ENCODE measurements at regions of chr7 and their contacts with region 1.

Region 1: GRCh38 chr7:135281363-135281949 is 47.8 kb downstream of the STRA8 start:
- DNase-seq: peak; percentile 84
- ATAC-seq: peak; percentile 88
- H3K4me3 ChIP-seq: peak overlapping the region; percentile 20; the same call in 1 of the 2 replicates
- H3K27ac ChIP-seq: no peak overlapping the region
- H3K4me1 ChIP-seq: peaks cover 12% of the 10 kb centered on the region; the same call in 1 of the 2 replicates
- H3K27me3 ChIP-seq: no peaks in the 10 kb centered on the region
- CTCF ChIP-seq: peak; percentile 99

Region 2: DNA sequence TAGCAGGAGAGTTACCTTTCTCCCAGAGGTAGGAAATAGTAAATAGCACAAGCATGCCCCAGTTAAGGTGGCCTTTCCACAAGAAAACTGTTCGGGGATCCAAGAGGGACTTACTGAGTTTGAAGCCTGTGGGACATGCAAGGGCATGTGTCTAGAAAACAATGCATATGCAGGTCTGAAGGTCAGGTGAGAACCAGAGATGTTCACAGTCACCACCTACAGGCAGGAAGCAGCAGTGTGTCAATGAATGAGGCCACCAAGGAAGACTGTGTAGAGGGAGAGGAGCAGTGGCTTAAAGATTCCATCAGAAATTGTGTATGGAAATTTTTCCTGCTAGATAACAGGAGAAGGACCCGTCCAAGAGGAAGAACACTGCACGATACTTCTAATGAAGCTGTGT is 436.0 kb before region 1 on chr7:
- CTCF ChIA-PET with region 1: no interaction called
- POLR2A ChIA-PET with region 1: no interaction called
- intact Hi-C with region 1: no loop called
- DNase-seq: peak; percentile 35
- ATAC-seq: peak; percentile 62
- H3K4me3 ChIP-seq: no peak overlapping the region
- H3K27ac ChIP-seq: no peak overlapping the region
- H3K4me1 ChIP-seq: peaks cover 13% of the 10 kb centered on the region
- H3K27me3 ChIP-seq: no peaks in the 10 kb centered on the region
- CTCF ChIP-seq: peak; percentile 60

Region 3: GRCh38 chr7:135240441-135240840 is 41.0 kb before region 1 on chr7:
- CTCF ChIA-PET with region 1: no interaction called
- POLR2A ChIA-PET with region 1: no interaction called
- intact Hi-C with region 1: no loop called
- DNase-seq: no peak
- ATAC-seq: no peak
- H3K4me3 ChIP-seq: no peak overlapping the region
- H3K27ac ChIP-seq: no peak overlapping the region
- H3K4me1 ChIP-seq: no peaks in the 10 kb centered on the region
- H3K27me3 ChIP-seq: no peaks in the 10 kb centered on the region
- CTCF ChIP-seq: no peak

Region 4: DNA sequence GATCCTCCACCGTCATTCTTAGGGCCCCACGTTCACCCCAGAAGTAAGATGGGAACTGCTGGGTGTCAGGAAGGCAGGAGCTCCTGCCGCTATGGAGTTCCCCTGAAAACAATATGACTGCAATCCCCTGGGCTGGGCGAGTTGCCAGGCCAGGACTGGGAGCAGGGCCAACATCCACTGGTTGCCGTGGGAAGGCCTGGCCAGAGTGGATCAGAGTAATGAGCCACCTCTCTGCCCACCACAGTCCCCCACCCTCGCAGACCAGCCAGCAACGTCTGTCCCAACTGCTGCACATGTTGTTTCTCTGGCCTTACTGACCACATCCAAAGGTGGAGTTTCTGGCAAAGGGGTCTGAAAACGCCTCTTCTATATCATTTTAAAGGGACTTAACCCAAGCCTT is 38.8 kb after region 1 on chr7:
- CTCF ChIA-PET with region 1: no interaction called
- POLR2A ChIA-PET with region 1: no interaction called
- intact Hi-C with region 1: no loop called
- DNase-seq: peak; percentile 56
- ATAC-seq: no peak
- H3K4me3 ChIP-seq: no peak overlapping the region
- H3K27ac ChIP-seq: no peak overlapping the region
- H3K4me1 ChIP-seq: peaks cover 4% of the 10 kb centered on the region; the same call in 1 of the 2 replicates
- H3K27me3 ChIP-seq: no peaks in the 10 kb centered on the region
- CTCF ChIP-seq: no peak

Region 5: GRCh38 chr7:135335628-135336139 is 54.2 kb after region 1 on chr7:
- CTCF ChIA-PET with region 1: interaction called, 19 read pairs
- POLR2A ChIA-PET with region 1: no interaction called
- intact Hi-C with region 1: loop called (anchors 1 kb)
- DNase-seq: peak; percentile 79
- ATAC-seq: peak; percentile 92
- H3K4me3 ChIP-seq: no peak overlapping the region
- H3K27ac ChIP-seq: no peak overlapping the region
- H3K4me1 ChIP-seq: peaks cover 14% of the 10 kb centered on the region
- H3K27me3 ChIP-seq: no peaks in the 10 kb centered on the region
- CTCF ChIP-seq: peak; percentile 84

Region 6: GRCh38 chr7:135403302-135403701 is 121.8 kb after region 1 on chr7:
- CTCF ChIA-PET with region 1: no interaction called
- POLR2A ChIA-PET with region 1: no interaction called
- intact Hi-C with region 1: loop called (anchors 5 kb)
- DNase-seq: no peak
- ATAC-seq: no peak
- H3K4me3 ChIP-seq: no peak overlapping the region
- H3K27ac ChIP-seq: no peak overlapping the region
- H3K4me1 ChIP-seq: no peaks in the 10 kb centered on the region
- H3K27me3 ChIP-seq: no peaks in the 10 kb centered on the region
- CTCF ChIP-seq: no peak

Region 7: DNA sequence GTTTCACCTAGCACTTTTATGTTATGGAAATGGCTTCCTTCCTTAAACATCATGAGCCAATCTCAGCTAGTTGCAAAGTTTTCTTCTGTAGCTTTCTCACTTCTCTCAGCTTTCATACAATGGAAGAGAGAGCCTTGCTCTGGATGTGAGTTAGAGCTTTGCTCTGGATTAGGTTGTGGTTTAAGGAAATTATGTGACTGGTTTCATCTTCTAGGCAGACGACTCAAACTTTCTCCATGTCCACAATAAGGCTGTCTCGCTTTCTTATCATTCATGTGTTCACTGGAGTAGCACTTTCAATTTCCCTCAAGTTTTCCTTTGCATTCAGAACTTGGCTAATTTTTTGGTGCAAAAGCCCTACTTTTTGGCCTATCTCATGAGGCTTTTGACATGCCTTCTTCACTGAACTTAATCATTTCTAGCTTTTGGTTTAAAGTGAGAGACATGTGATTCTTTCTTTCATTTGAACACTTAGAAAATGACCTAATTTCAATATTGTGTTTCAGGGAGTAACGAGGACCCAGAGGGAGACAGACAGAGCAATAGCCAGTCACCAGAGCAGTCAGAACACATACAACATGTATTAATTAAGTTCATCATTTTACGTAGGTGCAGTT is 178.6 kb after region 1 on chr7:
- CTCF ChIA-PET with region 1: no interaction called
- POLR2A ChIA-PET with region 1: no interaction called
- intact Hi-C with region 1: no loop called
- DNase-seq: no peak
- ATAC-seq: no peak
- H3K4me3 ChIP-seq: no peak overlapping the region
- H3K27ac ChIP-seq: no peak overlapping the region
- H3K4me1 ChIP-seq: no peaks in the 10 kb centered on the region
- H3K27me3 ChIP-seq: no peaks in the 10 kb centered on the region
- CTCF ChIP-seq: no peak

Region 8: GRCh38 chr7:135509903-135510602 is 228.6 kb after region 1 on chr7 and contains the start of gene CNOT4:
- CTCF ChIA-PET with region 1: no interaction called
- POLR2A ChIA-PET with region 1: no interaction called
- intact Hi-C with region 1: loop called (anchors 1 kb)
- DNase-seq: peak; percentile 93
- ATAC-seq: peak; percentile 91
- H3K4me3 ChIP-seq: peak within 1 kb of the TSS; percentile 84
- H3K27ac ChIP-seq: peak within 1 kb of the TSS; percentile 53; the same call in 1 of the 2 replicates
- H3K4me1 ChIP-seq: peaks cover 22% of the 10 kb centered on the region
- H3K27me3 ChIP-seq: no peaks in the 10 kb centered on the region
- CTCF ChIP-seq: no peak
- total RNA-seq, gene CNOT4: 8.4 and 9.7 TPM in 2 replicates

Region 9: DNA sequence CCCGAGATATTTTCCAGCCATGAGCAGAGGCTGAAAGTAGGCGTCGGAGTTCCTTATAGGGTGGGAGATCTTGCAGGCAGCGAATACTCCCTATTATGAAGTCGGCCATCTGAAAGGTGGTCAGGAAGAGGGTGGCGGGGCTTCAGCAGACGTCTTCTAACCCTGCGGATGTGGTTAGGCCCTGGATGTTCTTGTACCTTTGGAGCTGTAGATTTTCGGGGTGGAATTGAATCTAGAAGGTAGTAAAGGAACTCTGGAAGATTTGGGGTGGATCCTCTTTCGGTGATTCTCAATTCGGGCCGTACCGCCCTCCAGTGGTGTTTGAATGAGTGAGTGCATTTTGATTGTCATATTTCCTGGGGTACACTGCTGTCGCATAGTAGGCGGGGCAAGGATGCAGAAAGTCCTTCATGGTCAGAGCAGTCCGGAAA is 276.9 kb after region 1 on chr7:
- CTCF ChIA-PET with region 1: interaction called, 3 read pairs
- POLR2A ChIA-PET with region 1: no interaction called
- intact Hi-C with region 1: loop called (anchors 1 kb)
- DNase-seq: peak; percentile 75
- ATAC-seq: peak; percentile 66
- H3K4me3 ChIP-seq: peak overlapping the region; percentile 93
- H3K27ac ChIP-seq: peak overlapping the region; percentile 83
- H3K4me1 ChIP-seq: peaks cover 6% of the 10 kb centered on the region
- H3K27me3 ChIP-seq: no peaks in the 10 kb centered on the region
- CTCF ChIP-seq: peak; percentile 78

Region 10: GRCh38 chr7:135645296-135645904 is 363.9 kb after region 1 on chr7:
- CTCF ChIA-PET with region 1: no interaction called
- POLR2A ChIA-PET with region 1: no interaction called
- intact Hi-C with region 1: loop called (anchors 1 kb)
- DNase-seq: peak; percentile 63
- ATAC-seq: peak; percentile 80
- H3K4me3 ChIP-seq: no peak overlapping the region
- H3K27ac ChIP-seq: no peak overlapping the region
- H3K4me1 ChIP-seq: no peaks in the 10 kb centered on the region
- H3K27me3 ChIP-seq: no peaks in the 10 kb centered on the region
- CTCF ChIP-seq: peak; percentile 67

Measured in PC-3 (cell line).